Stomach (tissue), 19 donors: ENCODE measurements at regions of chr16 and their contacts with region 1.

Region 1: DNA sequence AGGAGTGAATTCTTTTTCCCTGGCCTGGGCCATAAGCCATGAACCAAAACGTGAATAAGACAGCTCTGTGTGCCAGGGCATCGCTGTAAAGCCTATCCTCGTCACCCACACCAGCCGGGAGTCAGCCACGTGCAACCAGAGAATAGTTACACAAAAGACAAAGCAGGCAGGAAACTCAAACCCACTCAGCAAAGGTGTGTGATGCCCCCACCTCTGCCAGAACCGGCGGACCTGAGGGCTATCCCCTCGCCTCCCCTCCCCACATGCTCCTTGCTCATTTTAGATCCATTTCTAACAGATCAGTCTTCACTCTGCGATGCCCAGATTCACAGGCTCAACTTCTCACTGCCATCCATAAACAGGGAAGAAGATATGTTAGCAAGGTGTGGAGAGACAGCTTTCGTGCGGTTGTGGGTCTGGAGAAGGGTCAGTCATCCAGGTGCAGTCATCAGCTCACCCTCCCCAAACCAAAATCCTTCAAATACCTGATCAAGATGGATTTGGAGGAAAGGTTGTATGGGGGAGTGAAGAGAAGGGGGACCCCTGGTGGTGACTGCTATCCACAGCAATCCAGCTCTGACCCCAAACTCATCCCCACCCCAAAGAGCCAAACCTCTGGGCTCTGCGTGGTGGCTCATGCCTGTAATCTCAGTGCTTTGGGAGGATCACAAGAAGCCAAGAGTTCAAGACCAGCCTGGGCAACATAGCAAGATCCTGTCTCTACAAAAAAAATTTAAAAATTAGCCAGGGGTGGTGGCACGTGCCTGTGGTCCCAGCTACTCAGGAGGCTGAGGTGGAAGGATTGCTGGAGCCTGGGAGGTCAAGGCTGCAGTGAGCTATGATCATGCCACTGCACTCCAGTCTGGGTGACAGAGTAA is 219.2 kb downstream of the C16orf78 start:
- DNase-seq: peak; percentile 30 to 74
- H3K4me3 ChIP-seq: no peak overlapping the region
- H3K27ac ChIP-seq: no peak overlapping the region
- H3K4me1 ChIP-seq: peaks cover 0 to 18% (median 8%) of the 10 kb centered on the region in 4 donors
- H3K27me3 ChIP-seq: peaks cover 0 to 8% (median 0%) of the 10 kb centered on the region in 3 donors
- CTCF ChIP-seq: peak in 5 of 7 experiments; percentile 25 to 81 (median 67)
- EP300 ChIP-seq: no peak
- POLR2A ChIP-seq: no peak

Region 2: DNA sequence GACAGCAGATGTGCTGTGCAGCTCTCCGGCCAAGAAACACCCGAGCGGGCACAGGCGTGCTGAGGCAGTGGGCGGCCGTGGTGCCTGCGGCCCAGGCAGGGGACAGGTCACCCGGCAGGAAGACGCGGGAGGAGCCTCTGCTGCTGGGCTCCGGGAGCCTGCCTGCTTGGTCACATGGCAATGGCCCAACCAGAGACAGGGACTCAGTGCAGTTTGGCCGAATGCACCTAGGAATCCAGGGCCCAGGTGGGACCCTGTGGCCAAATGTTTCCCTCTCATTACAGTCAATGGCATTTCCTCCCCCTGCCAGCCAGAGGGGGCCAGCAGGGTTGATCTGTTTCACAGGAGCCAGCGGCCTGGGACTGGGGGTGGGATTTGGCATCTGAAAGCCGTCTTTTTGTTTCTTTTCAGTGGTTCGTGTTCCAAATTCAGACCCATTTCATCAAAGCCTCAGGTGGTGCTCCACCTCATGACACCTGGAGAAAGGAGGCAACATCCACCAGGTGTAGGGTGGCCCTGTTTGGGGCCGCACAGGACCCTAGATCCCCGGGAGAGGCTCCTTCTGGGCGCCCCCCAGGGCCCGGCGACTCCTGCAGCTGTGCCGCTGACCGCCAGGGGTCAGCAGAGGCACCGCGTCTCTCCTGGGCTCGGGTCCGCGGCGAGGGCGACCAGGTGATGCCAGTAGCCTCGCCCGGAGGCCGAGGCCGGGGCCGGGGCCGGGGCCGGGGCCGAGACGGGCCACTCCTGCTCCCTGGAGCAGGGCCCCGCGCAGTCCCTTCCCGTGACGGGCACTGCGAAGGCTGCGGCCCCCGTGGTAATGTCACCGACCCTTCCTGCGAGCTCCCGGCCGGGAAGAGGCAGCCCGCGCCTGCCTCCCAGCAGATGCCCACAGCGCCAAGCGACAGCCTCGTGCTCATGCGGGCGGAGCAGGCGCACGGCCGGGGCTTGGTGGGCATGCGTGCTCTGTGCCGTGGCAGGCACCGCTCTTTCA is 100.7 kb before region 1 on chr16:
- intact Hi-C with region 1: loop called (anchors 10 kb)
- DNase-seq: peak; percentile 44 to 80
- H3K4me3 ChIP-seq: peak overlapping the region; percentile 27 to 43 (median 34)
- H3K27ac ChIP-seq: peak overlapping the region in 1 of 5 donors; percentile 36
- H3K4me1 ChIP-seq: peaks cover 0 to 12% (median 10%) of the 10 kb centered on the region in 4 donors
- H3K27me3 ChIP-seq: peaks cover 0 to 10% (median 0%) of the 10 kb centered on the region in 3 donors
- CTCF ChIP-seq: peak in 5 of 7 experiments; percentile 52 to 93 (median 90)
- EP300 ChIP-seq: no peak
- POLR2A ChIP-seq: no peak

Region 3: GRCh38 chr16:49513040-49513439 is 79.7 kb before region 1 on chr16:
- intact Hi-C with region 1: no loop called
- DNase-seq: peak in 1 of 2 donors; percentile 64
- H3K4me3 ChIP-seq: no peak overlapping the region
- H3K27ac ChIP-seq: no peak overlapping the region
- H3K4me1 ChIP-seq: peaks cover 0 to 16% (median 5%) of the 10 kb centered on the region in 4 donors
- H3K27me3 ChIP-seq: no peaks in the 10 kb centered on the region
- CTCF ChIP-seq: no peak
- EP300 ChIP-seq: no peak
- POLR2A ChIP-seq: no peak